ENCODE measurements at regions of chr5 and their contacts with region 1.

Region 1: DNA sequence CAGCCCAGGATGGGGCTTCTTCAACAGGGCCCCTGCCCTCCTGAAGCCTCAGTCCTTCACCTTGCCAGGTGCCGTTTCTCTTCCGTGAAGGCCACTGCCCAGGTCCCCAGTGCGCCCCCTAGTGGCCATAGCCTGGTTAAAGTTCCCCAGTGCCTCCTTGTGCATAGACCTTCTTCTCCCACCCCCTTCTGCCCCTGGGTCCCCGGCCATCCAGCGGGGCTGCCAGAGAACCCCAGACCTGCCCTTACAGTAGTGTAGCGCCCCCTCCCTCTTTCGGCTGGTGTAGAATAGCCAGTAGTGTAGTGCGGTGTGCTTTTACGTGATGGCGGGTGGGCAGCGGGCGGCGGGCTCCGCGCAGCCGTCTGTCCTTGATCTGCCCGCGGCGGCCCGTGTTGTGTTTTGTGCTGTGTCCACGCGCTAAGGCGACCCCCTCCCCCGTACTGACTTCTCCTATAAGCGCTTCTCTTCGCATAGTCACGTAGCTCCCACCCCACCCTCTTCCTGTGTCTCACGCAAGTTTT is 23.6 kb downstream of the PCDHGC5 start:
- DNase-seq: peak; percentile 89
- H3K4me3 Mint-ChIP-seq: peak overlapping the region; percentile 71
- H3K27ac Mint-ChIP-seq: peak overlapping the region; percentile 33
- H3K4me1 Mint-ChIP-seq: peaks cover 27% of the 10 kb centered on the region
- H3K27me3 Mint-ChIP-seq: peaks cover 9% of the 10 kb centered on the region

Region 2: GRCh38 chr5:141412854-141413539 is 99.5 kb before region 1 on chr5 and contains the start of gene PCDHGA10:
- CTCF ChIA-PET with region 1: interaction called, 17 read pairs
- DNase-seq: peak; percentile 72
- H3K4me3 Mint-ChIP-seq: peak within 1 kb of the TSS; percentile 78
- H3K27ac Mint-ChIP-seq: peak within 1 kb of the TSS; percentile 74
- H3K4me1 Mint-ChIP-seq: peaks cover 21% of the 10 kb centered on the region
- H3K27me3 Mint-ChIP-seq: peaks cover 79% of the 10 kb centered on the region

Region 3: GRCh38 chr5:141430332-141431113 is 81.9 kb before region 1 on chr5 and contains the start of gene PCDHGA12:
- CTCF ChIA-PET with region 1: interaction called, 43 read pairs
- DNase-seq: peak; percentile 36
- H3K4me3 Mint-ChIP-seq: peak within 1 kb of the TSS; percentile 67
- H3K27ac Mint-ChIP-seq: peak within 1 kb of the TSS; percentile 82
- H3K4me1 Mint-ChIP-seq: peaks cover 12% of the 10 kb centered on the region
- H3K27me3 Mint-ChIP-seq: peaks cover 59% of the 10 kb centered on the region

Region 4: GRCh38 chr5:141483902-141484301 is 28.5 kb before region 1 on chr5:
- CTCF ChIA-PET with region 1: interaction called, 11 read pairs
- DNase-seq: no peak
- H3K4me3 Mint-ChIP-seq: no peak overlapping the region
- H3K27ac Mint-ChIP-seq: no peak overlapping the region
- H3K4me1 Mint-ChIP-seq: no peaks in the 10 kb centered on the region
- H3K27me3 Mint-ChIP-seq: peaks cover 83% of the 10 kb centered on the region

Region 5: GRCh38 chr5:141524604-141525597 is 12.5 kb after region 1 on chr5:
- CTCF ChIA-PET with region 1: interaction called, 15 read pairs
- DNase-seq: peak; percentile 56
- H3K4me3 Mint-ChIP-seq: no peak overlapping the region
- H3K27ac Mint-ChIP-seq: no peak overlapping the region
- H3K4me1 Mint-ChIP-seq: peaks cover 9% of the 10 kb centered on the region
- H3K27me3 Mint-ChIP-seq: no peaks in the 10 kb centered on the region

Measured in activated naive CD4-positive, alpha-beta T cell treated with anti-CD3 and anti-CD28 coated beads, Interleukin-2, amount 10 ng/mL, durations not matched to agents 7 days and 5 days (primary cell).